ENCODE measurements at regions of chr14 and their contacts with region 1.

Region 1: DNA sequence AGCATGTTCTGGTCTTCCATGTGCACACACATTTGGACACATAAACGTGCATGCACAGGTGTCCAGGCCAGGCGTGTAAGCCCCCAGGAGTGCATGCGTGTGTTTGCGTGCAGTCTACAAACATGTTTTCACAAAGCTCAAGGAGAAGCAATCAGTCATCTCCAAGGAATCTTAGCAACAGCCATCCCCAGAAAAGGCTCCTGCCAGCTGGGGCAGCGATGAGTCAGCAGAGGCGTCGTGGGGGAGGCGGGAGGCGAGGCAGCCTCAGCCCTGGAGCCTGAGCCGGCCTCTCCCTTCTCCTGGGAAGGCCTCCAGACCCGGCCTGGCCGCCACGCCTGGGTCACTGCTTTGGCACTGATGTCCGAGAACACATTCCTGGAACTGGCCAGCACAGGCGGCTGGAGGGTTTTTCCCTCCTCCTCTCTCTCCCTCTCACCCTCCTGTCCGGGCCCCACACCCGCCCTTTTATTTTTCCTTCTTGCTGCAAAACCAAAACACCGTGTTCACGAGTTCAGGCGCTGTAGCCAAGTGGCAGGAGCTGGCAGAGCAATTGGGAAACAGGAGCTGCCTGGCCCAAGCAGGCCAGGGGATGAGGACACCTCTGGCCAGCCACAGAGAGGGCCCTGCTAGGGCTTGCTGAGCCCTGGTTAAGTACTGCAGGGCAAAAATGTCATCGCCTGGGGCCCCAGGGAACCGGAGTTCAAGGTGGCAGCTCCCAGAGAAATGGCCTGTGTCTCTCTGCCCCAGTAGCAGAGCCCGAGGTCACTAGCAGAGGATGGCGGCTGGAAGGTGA is 92.7 kb downstream of the LRRC74A start:
- DNase-seq: peak; percentile 66 to 97 (median 88)

Region 2: GRCh38 chr14:76948213-76948947 is 29.4 kb after region 1 on chr14:
- intact Hi-C with region 1: loop called (anchors 2 kb)
- DNase-seq: no peak

Region 3: DNA sequence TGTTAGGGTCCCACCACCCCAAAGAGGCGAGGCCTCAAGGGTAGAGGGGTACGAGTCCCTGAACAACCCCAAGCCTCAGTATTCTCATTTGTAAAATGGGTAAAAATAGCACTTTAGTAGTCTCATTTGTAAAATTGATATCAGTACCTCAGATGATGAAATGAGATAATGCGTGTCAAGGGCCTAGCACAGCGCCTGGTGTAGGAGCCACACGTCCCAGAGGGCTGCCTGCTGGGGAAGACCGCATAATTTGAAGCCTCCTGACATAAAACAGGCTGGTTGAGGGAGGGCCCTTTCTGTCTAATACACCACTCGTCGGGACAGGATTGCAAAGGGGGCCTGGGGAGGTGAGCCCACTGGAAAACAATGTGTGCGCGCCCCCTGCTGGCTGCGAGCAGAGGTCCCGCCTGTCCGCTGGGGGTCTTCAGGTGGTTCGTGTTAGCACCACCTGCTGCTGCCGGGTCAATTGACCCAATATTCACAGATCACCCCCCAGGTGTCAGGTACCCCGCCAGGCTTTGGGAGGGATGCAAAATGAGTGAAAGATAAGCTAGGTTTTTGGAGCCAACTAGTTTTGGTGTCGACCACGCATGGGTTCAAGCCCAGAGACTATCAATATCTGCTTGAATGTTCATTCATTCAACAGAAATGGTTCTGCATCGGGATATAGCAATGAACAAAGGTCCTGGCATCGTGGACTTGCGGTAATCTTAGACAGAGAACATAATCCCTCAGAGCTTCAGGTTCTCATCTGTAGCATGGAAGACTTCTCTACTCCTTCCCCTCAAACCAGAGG is 134.3 kb after region 1 on chr14:
- intact Hi-C with region 1: loop called (anchors 5 kb)
- DNase-seq: peak in 36 of 42 donors; percentile 42 to 86 (median 73)

Measured in head of caudate nucleus (tissue), 42 donors.